Activated CD4-positive, alpha-beta memory T cell treated with anti-CD3 and anti-CD28 coated beads for 36 hours (primary cell): ENCODE measurements at regions of chr6 and their contacts with region 1.

Region 1: GRCh38 chr6:105601541-105602236 is 198.8 kb upstream of the PREP start:
- DNase-seq: peak; percentile 86
- H3K4me3 Mint-ChIP-seq: peak overlapping the region; percentile 33
- H3K27ac Mint-ChIP-seq: peak overlapping the region; percentile 86
- H3K4me1 Mint-ChIP-seq: peaks cover 26% of the 10 kb centered on the region
- H3K27me3 Mint-ChIP-seq: peaks cover 3% of the 10 kb centered on the region

Region 2: DNA sequence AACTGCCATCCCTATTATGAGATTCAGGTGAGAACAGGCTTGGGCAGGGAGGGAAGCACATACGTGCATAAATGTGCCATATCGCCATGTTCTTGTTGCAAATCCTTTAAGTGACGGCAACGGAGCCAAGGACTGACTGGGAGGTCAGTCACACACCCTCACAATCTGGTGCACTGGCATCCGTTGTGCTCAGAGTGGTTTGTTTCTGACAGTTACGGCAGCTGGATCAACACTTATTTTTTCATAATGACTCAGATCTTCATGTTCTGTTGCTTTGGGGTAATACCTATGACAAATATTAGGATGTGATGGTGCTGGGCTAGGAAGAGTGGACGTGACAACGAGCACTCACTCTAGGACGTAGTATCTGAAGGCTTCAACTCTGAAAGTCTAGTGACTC is 142.6 kb before region 1 on chr6:
- CTCF ChIA-PET with region 1: no interaction called
- POLR2A ChIA-PET with region 1: no interaction called
- intact Hi-C with region 1: loop called (anchors 1 kb)
- DNase-seq: peak; percentile 71
- H3K4me3 Mint-ChIP-seq: peak overlapping the region; percentile 36
- H3K27ac Mint-ChIP-seq: peak overlapping the region; percentile 80
- H3K4me1 Mint-ChIP-seq: peaks cover 30% of the 10 kb centered on the region
- H3K27me3 Mint-ChIP-seq: peaks cover 20% of the 10 kb centered on the region

Region 3: GRCh38 chr6:105522626-105523322 is 78.9 kb before region 1 on chr6:
- CTCF ChIA-PET with region 1: no interaction called
- POLR2A ChIA-PET with region 1: no interaction called
- intact Hi-C with region 1: loop called (anchors 1 kb)
- DNase-seq: peak; percentile 14
- H3K4me3 Mint-ChIP-seq: no peak overlapping the region
- H3K27ac Mint-ChIP-seq: peak overlapping the region; percentile 30
- H3K4me1 Mint-ChIP-seq: peaks cover 22% of the 10 kb centered on the region
- H3K27me3 Mint-ChIP-seq: peaks cover 2% of the 10 kb centered on the region

Region 4: GRCh38 chr6:105560611-105561066 is 41.0 kb before region 1 on chr6:
- CTCF ChIA-PET with region 1: no interaction called
- POLR2A ChIA-PET with region 1: no interaction called
- intact Hi-C with region 1: loop called (anchors 1 kb)
- DNase-seq: peak; percentile 22
- H3K4me3 Mint-ChIP-seq: no peak overlapping the region
- H3K27ac Mint-ChIP-seq: peak overlapping the region; percentile 26
- H3K4me1 Mint-ChIP-seq: peaks cover 9% of the 10 kb centered on the region
- H3K27me3 Mint-ChIP-seq: peaks cover 10% of the 10 kb centered on the region

Region 5: GRCh38 chr6:105620878-105621277 is 19.2 kb after region 1 on chr6:
- CTCF ChIA-PET with region 1: no interaction called
- POLR2A ChIA-PET with region 1: interaction called, 6 read pairs
- intact Hi-C with region 1: loop called (anchors 1 kb)
- DNase-seq: peak; percentile 47
- H3K4me3 Mint-ChIP-seq: no peak overlapping the region
- H3K27ac Mint-ChIP-seq: peak overlapping the region; percentile 81
- H3K4me1 Mint-ChIP-seq: peaks cover 19% of the 10 kb centered on the region
- H3K27me3 Mint-ChIP-seq: peaks cover 5% of the 10 kb centered on the region